Heart right ventricle (tissue), 16 donors: ENCODE measurements at regions of chr7 and their contacts with region 1.

Region 1: DNA sequence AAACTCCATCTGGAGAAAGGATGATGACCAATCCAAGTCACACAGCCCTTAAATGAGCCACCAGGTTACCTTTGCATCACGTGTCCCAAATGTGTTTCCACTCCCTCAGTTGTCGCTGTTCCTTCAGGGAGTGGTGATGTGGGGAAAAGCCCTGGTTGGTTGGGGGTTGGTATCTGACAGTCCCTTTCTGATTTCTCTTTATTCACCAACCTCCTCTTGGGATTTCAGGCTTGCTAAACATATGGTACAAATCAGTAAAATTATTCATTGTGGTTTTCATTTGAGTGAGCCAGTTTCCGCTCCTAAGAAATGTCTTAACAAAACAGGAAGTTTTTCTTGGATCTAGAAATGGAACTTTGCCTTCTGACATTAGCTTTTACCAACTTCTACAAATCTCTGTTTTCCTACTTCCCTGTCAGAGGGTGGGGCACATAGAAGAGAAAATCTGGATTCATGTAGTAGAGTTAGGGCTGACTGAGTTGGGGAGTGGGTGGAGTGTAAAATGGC is 40.0 kb upstream of the KMT2E start:
- DNase-seq: no peak
- ATAC-seq: peak; percentile 41 to 76 (median 64)
- H3K4me3 ChIP-seq: no peak overlapping the region
- H3K27ac ChIP-seq: peak overlapping the region; percentile 55 to 98 (median 84)
- H3K4me1 ChIP-seq: peaks cover 15 to 80% (median 61%) of the 10 kb centered on the region in 9 donors
- H3K27me3 ChIP-seq: no peaks in the 10 kb centered on the region
- CTCF ChIP-seq: no peak

Region 2: GRCh38 chr7:104958371-104958865 is 15.5 kb before region 1 on chr7:
- intact Hi-C with region 1: loop called in 1 of 10 experiments (anchors 2 kb)
- DNase-seq: no peak
- ATAC-seq: peak in 2 of 8 donors; percentile 18 to 20
- H3K4me3 ChIP-seq: no peak overlapping the region
- H3K27ac ChIP-seq: peak overlapping the region in 5 of 10 donors; percentile 4 to 26 (median 9)
- H3K4me1 ChIP-seq: peaks cover 0 to 57% (median 22%) of the 10 kb centered on the region in 9 donors
- H3K27me3 ChIP-seq: no peaks in the 10 kb centered on the region
- CTCF ChIP-seq: no peak